IMR-90 (cell line): ENCODE measurements at regions of chr1 and their contacts with region 1.

Region 1: DNA sequence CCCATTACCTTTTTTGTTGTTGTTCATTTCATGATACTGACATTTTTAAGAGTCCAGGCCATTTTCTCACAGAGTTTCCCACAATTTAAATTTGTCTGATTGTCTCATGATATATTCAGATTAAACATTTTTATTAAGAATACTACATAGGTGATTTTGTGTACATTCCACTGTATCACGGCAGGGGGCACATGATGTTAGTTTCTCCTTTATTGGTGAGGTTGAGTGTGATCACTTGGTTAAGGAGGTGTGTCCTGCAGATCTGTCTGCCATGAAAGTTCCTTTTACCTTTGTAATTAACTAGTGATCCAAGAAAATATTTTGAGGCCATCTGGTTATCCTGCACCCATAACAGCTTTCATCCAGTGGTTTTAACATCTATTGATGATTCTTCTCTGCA is 11.8 kb downstream of the RTCA start:
- DNase-seq: no peak
- ATAC-seq: no peak
- H3K4me3 ChIP-seq: no peak overlapping the region
- H3K27ac ChIP-seq: no peak overlapping the region
- H3K4me1 ChIP-seq: no peaks in the 10 kb centered on the region
- H3K27me3 ChIP-seq: no peaks in the 10 kb centered on the region
- CTCF ChIP-seq: no peak
- POLR2A ChIP-seq: no peak
- RAD21 ChIP-seq: no peak

Region 2: GRCh38 chr1:100028765-100029164 is 249.1 kb before region 1 on chr1:
- CTCF ChIA-PET with region 1: no interaction called
- POLR2A ChIA-PET with region 1: no interaction called
- dilution Hi-C with region 1: no loop called
- in situ Hi-C with region 1: no loop called
- intact Hi-C with region 1: no loop called
- DNase-seq: no peak
- ATAC-seq: no peak
- H3K4me3 ChIP-seq: no peak overlapping the region
- H3K27ac ChIP-seq: no peak overlapping the region
- H3K4me1 ChIP-seq: no peaks in the 10 kb centered on the region
- H3K27me3 ChIP-seq: no peaks in the 10 kb centered on the region
- CTCF ChIP-seq: no peak
- POLR2A ChIP-seq: no peak
- RAD21 ChIP-seq: no peak

Region 3: GRCh38 chr1:100051401-100051800 is 226.5 kb before region 1 on chr1:
- CTCF ChIA-PET with region 1: no interaction called
- POLR2A ChIA-PET with region 1: no interaction called
- dilution Hi-C with region 1: no loop called
- in situ Hi-C with region 1: no loop called
- intact Hi-C with region 1: no loop called
- DNase-seq: no peak
- ATAC-seq: no peak
- H3K4me3 ChIP-seq: no peak overlapping the region
- H3K27ac ChIP-seq: no peak overlapping the region
- H3K4me1 ChIP-seq: peaks cover 2% of the 10 kb centered on the region; the same call in 1 of the 2 replicates
- H3K27me3 ChIP-seq: no peaks in the 10 kb centered on the region
- CTCF ChIP-seq: no peak
- POLR2A ChIP-seq: no peak
- RAD21 ChIP-seq: no peak

Region 4: GRCh38 chr1:100219883-100220282 is 58.0 kb before region 1 on chr1:
- CTCF ChIA-PET with region 1: no interaction called
- POLR2A ChIA-PET with region 1: no interaction called
- dilution Hi-C with region 1: no loop called
- in situ Hi-C with region 1: no loop called
- intact Hi-C with region 1: loop called (anchors 10 kb)
- DNase-seq: no peak
- ATAC-seq: no peak
- H3K4me3 ChIP-seq: no peak overlapping the region
- H3K27ac ChIP-seq: no peak overlapping the region
- H3K4me1 ChIP-seq: no peaks in the 10 kb centered on the region
- H3K27me3 ChIP-seq: no peaks in the 10 kb centered on the region
- CTCF ChIP-seq: no peak
- POLR2A ChIP-seq: no peak
- RAD21 ChIP-seq: no peak

Region 5: DNA sequence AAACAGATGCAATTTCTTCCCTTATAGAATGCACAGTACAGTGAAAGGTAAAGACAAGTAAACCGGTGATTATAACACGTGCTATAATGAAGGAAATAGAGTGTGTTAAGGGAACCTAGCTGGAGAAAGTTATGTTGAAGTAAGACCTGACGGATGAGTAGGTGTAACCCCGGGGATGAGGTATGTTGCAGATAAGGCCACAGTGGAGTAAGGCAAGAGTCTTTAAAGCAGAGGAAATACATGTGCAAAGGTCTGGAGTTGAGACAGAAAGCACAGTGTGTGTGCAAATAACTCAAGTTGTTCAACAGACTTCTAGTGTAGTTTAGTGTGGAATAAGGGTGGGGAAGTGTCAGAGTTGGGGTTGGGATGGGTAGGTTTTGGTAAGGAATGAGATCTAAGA is 31.1 kb before region 1 on chr1:
- CTCF ChIA-PET with region 1: no interaction called
- POLR2A ChIA-PET with region 1: interaction called, 18 read pairs
- dilution Hi-C with region 1: no loop called
- in situ Hi-C with region 1: no loop called
- intact Hi-C with region 1: no loop called
- DNase-seq: no peak
- ATAC-seq: no peak
- H3K4me3 ChIP-seq: no peak overlapping the region
- H3K27ac ChIP-seq: no peak overlapping the region
- H3K4me1 ChIP-seq: 0 out of 2 replicates have a peak, but pooled peaks cover 2% of the 10 kb centered on the region
- H3K27me3 ChIP-seq: no peaks in the 10 kb centered on the region
- CTCF ChIP-seq: no peak
- POLR2A ChIP-seq: no peak
- RAD21 ChIP-seq: no peak

Region 6: GRCh38 chr1:100300691-100301090 is 22.8 kb after region 1 on chr1:
- CTCF ChIA-PET with region 1: no interaction called
- POLR2A ChIA-PET with region 1: interaction called, 13 read pairs
- dilution Hi-C with region 1: no loop called
- in situ Hi-C with region 1: no loop called
- intact Hi-C with region 1: no loop called
- DNase-seq: no peak
- ATAC-seq: no peak
- H3K4me3 ChIP-seq: no peak overlapping the region
- H3K27ac ChIP-seq: no peak overlapping the region
- H3K4me1 ChIP-seq: no peaks in the 10 kb centered on the region
- H3K27me3 ChIP-seq: no peaks in the 10 kb centered on the region; the same call in 1 of the 2 replicates
- CTCF ChIP-seq: no peak
- POLR2A ChIP-seq: no peak
- RAD21 ChIP-seq: no peak

Region 7: DNA sequence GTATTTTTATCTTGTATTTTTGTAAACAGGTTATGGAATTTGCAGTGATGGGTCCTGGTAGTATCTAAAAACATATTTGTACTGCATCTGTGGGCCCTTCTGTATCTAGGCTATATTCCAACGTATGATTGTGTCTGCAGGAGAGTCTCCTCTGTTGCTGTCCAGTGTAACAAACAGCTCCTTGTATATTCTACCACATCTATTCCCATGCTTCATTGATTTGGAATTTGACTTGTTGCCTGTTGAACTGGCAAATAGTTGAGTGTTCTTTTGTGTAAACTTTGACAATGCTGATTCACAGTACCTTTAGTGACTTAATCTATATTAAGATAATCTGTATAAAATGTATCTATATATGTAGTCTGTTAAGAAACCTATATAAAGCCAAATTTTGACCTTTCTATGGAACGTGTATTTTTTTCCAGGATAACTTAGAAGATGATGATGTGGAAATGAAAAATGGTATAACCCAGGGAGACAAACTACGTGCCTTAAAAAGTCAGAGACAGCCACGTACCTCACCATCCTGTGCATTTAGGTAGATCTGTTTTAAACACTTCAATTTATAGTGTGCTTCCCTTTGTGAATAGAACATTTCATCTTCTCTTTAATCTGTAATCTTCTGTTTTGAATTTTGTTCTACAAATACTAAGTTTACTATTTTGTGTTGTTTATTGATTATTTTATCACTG is 216.7 kb after region 1 on chr1:
- CTCF ChIA-PET with region 1: no interaction called
- POLR2A ChIA-PET with region 1: no interaction called
- dilution Hi-C with region 1: no loop called
- in situ Hi-C with region 1: no loop called
- intact Hi-C with region 1: no loop called
- DNase-seq: peak; percentile 84
- ATAC-seq: peak; percentile 95
- H3K4me3 ChIP-seq: no peak overlapping the region
- H3K27ac ChIP-seq: no peak overlapping the region
- H3K4me1 ChIP-seq: no peaks in the 10 kb centered on the region; the same call in 1 of the 2 replicates
- H3K27me3 ChIP-seq: no peaks in the 10 kb centered on the region
- CTCF ChIP-seq: no peak
- POLR2A ChIP-seq: no peak
- RAD21 ChIP-seq: no peak

Region 8: DNA sequence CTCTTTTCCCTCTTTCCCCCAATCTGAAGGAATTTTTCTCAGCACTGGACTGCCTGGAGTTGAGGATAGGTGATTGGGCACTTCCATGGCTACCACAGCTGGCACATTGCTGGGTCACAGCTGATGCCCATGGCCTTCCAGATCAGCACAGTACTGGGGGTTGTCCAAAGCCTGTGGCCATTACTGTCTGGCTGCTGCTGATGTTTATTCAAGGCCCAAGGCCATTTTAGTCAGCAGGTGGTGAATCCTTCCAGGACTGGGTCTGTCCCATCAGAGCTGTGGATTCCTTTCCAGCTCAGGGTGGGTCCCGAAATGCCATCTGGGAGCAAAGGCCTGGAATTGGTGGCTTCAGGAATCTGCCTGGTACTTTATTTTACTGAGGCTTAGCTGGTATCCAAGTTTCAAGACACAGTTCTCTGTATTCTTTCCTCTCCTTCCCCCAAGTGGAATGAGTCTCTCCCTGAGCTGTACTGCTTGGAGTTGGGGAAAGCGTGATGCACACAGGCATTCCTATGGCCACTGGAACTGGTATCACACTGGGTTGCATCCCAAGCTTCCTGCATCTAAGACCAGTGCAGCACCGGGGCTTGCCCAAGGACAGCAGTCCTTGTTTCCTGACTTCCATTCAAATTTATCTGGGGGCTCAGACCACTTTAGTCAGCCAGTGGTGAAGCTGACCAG is 279.2 kb after region 1 on chr1:
- CTCF ChIA-PET with region 1: no interaction called
- POLR2A ChIA-PET with region 1: no interaction called
- dilution Hi-C with region 1: no loop called
- in situ Hi-C with region 1: no loop called
- intact Hi-C with region 1: no loop called
- DNase-seq: no peak
- ATAC-seq: no peak
- H3K4me3 ChIP-seq: no peak overlapping the region
- H3K27ac ChIP-seq: no peak overlapping the region
- H3K4me1 ChIP-seq: no peaks in the 10 kb centered on the region
- H3K27me3 ChIP-seq: no peaks in the 10 kb centered on the region
- CTCF ChIP-seq: no peak
- POLR2A ChIP-seq: no peak
- RAD21 ChIP-seq: no peak